Transverse colon (tissue), 4 donors: ENCODE measurements at regions of chr5 and their contacts with region 1.

Region 1: GRCh38 chr5:37308796-37309195 is 59.6 kb upstream of the CPLANE1 start:
- DNase-seq: no peak
- H3K4me3 ChIP-seq: no peak overlapping the region
- H3K27ac ChIP-seq: no peak overlapping the region
- H3K4me1 ChIP-seq: no peaks in the 10 kb centered on the region
- H3K27me3 ChIP-seq: no peaks in the 10 kb centered on the region
- CTCF ChIP-seq: no peak
- EP300 ChIP-seq: no peak
- POLR2A ChIP-seq: no peak

Region 2: DNA sequence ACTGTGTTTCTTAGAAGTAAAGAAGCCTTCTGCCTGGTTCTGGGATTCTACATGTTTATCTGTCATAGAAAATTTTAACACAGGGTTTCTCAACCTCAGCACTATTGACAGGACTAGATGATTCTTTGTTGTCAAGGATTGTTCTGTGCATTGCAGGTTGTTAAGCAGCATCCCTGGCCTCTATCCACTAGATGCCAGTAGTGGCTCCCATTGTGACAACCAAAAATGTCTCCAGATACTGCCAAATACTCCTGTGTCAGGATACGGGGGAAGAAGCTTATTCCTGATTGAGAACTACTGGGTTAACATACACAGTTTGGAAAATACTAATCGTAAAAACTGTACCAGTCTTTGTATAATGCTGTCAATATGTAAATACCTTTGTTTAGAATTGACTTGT is 265.1 kb before region 1 on chr5:
- in situ Hi-C with region 1: loop called in 3 of 4 experiments (anchors 25 kb)
- intact Hi-C with region 1: no loop called
- DNase-seq: no peak
- H3K4me3 ChIP-seq: no peak overlapping the region
- H3K27ac ChIP-seq: no peak overlapping the region
- H3K4me1 ChIP-seq: no peaks in the 10 kb centered on the region
- H3K27me3 ChIP-seq: no peaks in the 10 kb centered on the region
- CTCF ChIP-seq: no peak
- EP300 ChIP-seq: no peak
- POLR2A ChIP-seq: no peak

Region 3: DNA sequence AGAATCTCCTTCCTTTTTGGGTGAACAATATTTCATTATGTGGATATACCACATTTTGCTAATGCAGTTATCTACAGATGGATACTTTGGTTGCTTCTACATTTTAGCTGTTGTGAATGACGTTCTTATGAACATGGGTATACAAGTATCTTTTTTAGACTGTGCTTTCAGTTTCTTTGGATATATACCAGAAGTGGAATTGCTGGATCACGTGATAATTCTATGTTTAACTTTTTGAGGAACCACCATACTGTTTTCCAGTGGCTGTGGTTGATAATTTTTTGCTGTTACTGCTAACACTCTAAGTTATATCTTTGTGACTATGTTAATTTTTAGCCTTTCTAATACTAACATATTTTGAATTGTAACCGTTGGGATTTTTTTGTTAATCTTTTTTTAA is 82.8 kb after region 1 on chr5:
- in situ Hi-C with region 1: no loop called
- intact Hi-C with region 1: no loop called
- DNase-seq: no peak
- H3K4me3 ChIP-seq: no peak overlapping the region
- H3K27ac ChIP-seq: no peak overlapping the region
- H3K4me1 ChIP-seq: no peaks in the 10 kb centered on the region
- H3K27me3 ChIP-seq: no peaks in the 10 kb centered on the region
- CTCF ChIP-seq: no peak
- EP300 ChIP-seq: no peak
- POLR2A ChIP-seq: no peak

Region 4: GRCh38 chr5:37436146-37436934 is 127.5 kb after region 1 on chr5:
- in situ Hi-C with region 1: no loop called
- intact Hi-C with region 1: no loop called
- DNase-seq: no peak
- H3K4me3 ChIP-seq: no peak overlapping the region
- H3K27ac ChIP-seq: no peak overlapping the region
- H3K4me1 ChIP-seq: no peaks in the 10 kb centered on the region
- H3K27me3 ChIP-seq: no peaks in the 10 kb centered on the region
- CTCF ChIP-seq: no peak
- EP300 ChIP-seq: no peak
- POLR2A ChIP-seq: no peak

Region 5: DNA sequence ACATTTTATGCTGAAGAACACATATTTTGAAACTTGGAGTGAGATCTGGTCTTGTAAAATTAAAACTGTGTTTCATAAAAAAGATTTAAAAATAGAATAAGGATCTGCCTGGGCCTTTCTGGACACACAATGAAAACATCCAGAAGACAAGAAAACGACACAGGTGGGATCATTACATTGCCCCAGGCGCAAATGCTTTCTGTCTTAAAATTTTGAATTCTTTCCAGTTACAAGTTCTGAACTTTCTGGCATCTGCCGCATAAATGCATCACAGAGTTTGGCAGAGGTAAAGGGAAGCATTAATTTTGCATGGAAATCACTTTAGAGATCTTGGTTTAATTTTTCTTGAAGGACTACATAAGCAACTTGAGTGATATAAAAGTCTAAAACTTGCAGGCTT is 289.9 kb after region 1 on chr5:
- in situ Hi-C with region 1: no loop called
- intact Hi-C with region 1: no loop called
- DNase-seq: no peak
- H3K4me3 ChIP-seq: no peak overlapping the region
- H3K27ac ChIP-seq: peak overlapping the region in 3 of 4 donors; percentile 25 to 40 (median 31)
- H3K4me1 ChIP-seq: peaks cover 0 to 9% (median 0%) of the 10 kb centered on the region in 4 donors
- H3K27me3 ChIP-seq: no peaks in the 10 kb centered on the region
- CTCF ChIP-seq: no peak
- EP300 ChIP-seq: no peak
- POLR2A ChIP-seq: no peak